Activated B cell treated with CpG ODN at 0.5 μM for 24 hours (primary cell): ENCODE measurements at regions of chr20 and their contacts with region 1.

Region 1: DNA sequence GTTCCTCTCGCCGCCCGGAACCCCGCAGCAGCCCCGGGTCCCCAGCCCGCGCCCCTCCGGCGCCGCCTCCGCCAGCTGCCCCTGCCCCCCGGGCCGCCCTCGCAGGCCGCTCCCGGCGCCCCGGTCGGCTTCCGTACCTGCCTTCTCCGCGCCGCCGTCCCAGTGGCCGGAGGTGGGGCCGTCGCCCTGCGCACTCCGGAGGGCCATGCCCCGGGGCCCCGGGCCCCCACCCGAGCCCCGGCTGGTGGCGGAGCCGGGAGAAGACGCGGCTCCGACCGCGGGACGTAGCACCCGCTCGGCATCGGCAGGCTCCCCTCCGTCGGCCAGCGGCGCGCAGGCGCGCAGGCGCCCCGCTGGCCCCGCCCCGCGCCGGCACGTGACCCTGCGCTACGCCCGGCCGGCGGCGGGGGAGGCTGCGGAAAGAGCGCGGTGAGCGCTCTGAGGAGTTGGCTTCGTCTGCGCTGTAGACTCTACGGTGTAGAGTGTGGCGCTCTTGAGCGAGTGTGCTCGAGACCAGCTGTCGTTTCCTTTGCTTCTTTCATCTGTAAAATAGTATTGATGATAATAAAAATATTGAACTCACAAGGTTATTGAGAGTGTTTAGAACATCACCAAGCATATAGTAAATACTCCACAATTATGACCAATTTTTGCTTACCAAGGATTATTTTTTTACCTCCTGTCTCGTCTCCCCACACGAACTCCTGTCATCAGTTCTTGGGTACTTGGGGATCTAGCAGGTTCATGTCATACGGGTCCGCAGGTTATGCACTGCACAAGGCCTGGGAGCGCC is at the start of gene TBC1D20:
- DNase-seq: peak; percentile 91
- ATAC-seq: peak; percentile 96
- H3K4me3 Mint-ChIP-seq: peak within 1 kb of the TSS; percentile 93
- H3K27ac Mint-ChIP-seq: peak within 1 kb of the TSS; percentile 89
- H3K4me1 Mint-ChIP-seq: peaks cover 24% of the 10 kb centered on the region
- H3K27me3 Mint-ChIP-seq: peaks cover 2% of the 10 kb centered on the region
- CTCF ChIP-seq: no peak
- total RNA-seq, gene TBC1D20: 21.4 and 24.1 TPM in 2 replicates

Region 2: GRCh38 chr20:189611-190010 is 272.8 kb before region 1 on chr20 and contains the start of gene DEFB128:
- CTCF ChIA-PET with region 1: no interaction called
- POLR2A ChIA-PET with region 1: no interaction called
- intact Hi-C with region 1: no loop called
- DNase-seq: no peak
- ATAC-seq: no peak
- H3K4me3 Mint-ChIP-seq: no peak within 1 kb of the TSS
- H3K27ac Mint-ChIP-seq: no peak within 1 kb of the TSS
- H3K4me1 Mint-ChIP-seq: no peaks in the 10 kb centered on the region
- H3K27me3 Mint-ChIP-seq: peaks cover 33% of the 10 kb centered on the region
- CTCF ChIP-seq: no peak
- total RNA-seq, gene DEFB128: not detected in 2 replicates

Region 3: GRCh38 chr20:419556-420168 is 42.7 kb before region 1 on chr20:
- CTCF ChIA-PET with region 1: no interaction called
- POLR2A ChIA-PET with region 1: no interaction called
- intact Hi-C with region 1: no loop called
- DNase-seq: no peak
- ATAC-seq: peak; percentile 60
- H3K4me3 Mint-ChIP-seq: no peak overlapping the region
- H3K27ac Mint-ChIP-seq: no peak overlapping the region
- H3K4me1 Mint-ChIP-seq: peaks cover 10% of the 10 kb centered on the region
- H3K27me3 Mint-ChIP-seq: no peaks in the 10 kb centered on the region
- CTCF ChIP-seq: no peak

Region 4: GRCh38 chr20:438571-439469 is 23.6 kb before region 1 on chr20:
- CTCF ChIA-PET with region 1: interaction called, 3 read pairs
- POLR2A ChIA-PET with region 1: no interaction called
- intact Hi-C with region 1: loop called (anchors 2 kb)
- DNase-seq: no peak
- ATAC-seq: peak; percentile 41
- H3K4me3 Mint-ChIP-seq: peak overlapping the region; percentile 67
- H3K27ac Mint-ChIP-seq: peak overlapping the region; percentile 82
- H3K4me1 Mint-ChIP-seq: peaks cover 49% of the 10 kb centered on the region
- H3K27me3 Mint-ChIP-seq: no peaks in the 10 kb centered on the region
- CTCF ChIP-seq: no peak

Region 5: GRCh38 chr20:478949-479429 is 16.6 kb after region 1 on chr20:
- CTCF ChIA-PET with region 1: interaction called, 5 read pairs
- POLR2A ChIA-PET with region 1: no interaction called
- intact Hi-C with region 1: loop called (anchors 1 kb)
- DNase-seq: no peak
- ATAC-seq: peak; percentile 66
- H3K4me3 Mint-ChIP-seq: no peak overlapping the region
- H3K27ac Mint-ChIP-seq: no peak overlapping the region
- H3K4me1 Mint-ChIP-seq: peaks cover 5% of the 10 kb centered on the region
- H3K27me3 Mint-ChIP-seq: no peaks in the 10 kb centered on the region
- CTCF ChIP-seq: no peak